CD14-positive monocyte (primary cell): ENCODE measurements at regions of chrX and their contacts with region 1.

Region 1: DNA sequence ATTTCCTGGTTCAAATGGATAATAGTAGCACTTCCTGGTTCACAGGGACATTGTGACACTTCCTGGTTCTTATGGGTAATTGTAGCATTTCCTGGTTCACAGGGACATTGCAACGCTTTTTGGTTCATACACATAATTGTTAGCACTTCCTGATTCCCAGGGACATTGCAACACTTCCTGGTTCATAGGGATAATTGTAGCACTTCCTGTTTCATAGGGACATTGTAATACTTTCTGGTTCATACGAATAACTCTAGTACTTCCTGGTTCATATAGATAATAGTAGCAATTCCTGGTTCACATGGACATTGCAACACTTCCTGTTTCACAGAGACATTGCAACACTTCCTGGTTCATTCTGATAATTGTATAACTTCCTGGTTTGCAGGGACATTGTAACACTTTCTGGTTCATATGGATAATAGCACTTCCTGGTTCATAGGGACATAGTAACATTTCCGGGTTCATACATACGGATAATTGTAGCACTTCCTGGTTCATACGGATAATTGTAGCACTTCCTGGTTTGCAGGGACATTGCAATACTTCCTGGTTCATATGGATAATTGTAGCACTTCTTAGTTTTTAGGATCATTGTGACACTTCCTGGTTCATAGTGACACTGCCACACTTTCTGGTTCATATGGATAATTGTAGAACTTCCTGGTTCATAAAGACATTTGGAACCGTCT is 61.6 kb upstream of the CD99 start:
- DNase-seq: peak; percentile 62 to 86 (median 76)
- H3K4me3 ChIP-seq: peak overlapping the region in 1 of 3 experiments; percentile 16
- H3K4me3 Mint-ChIP-seq: no peak overlapping the region
- H3K27ac ChIP-seq: peak overlapping the region in 1 of 2 donors; percentile 68
- H3K27ac Mint-ChIP-seq: peak overlapping the region; percentile 82 to 95 (median 90)
- H3K4me1 ChIP-seq: no peaks in the 10 kb centered on the region
- H3K4me1 Mint-ChIP-seq: peaks cover 6% of the 10 kb centered on the region
- H3K27me3 ChIP-seq: no peaks in the 10 kb centered on the region
- H3K27me3 Mint-ChIP-seq: peaks cover 0 to 28% (median 0%) of the 10 kb centered on the region in 3 donors
- CTCF ChIP-seq: no peak

Region 2: DNA sequence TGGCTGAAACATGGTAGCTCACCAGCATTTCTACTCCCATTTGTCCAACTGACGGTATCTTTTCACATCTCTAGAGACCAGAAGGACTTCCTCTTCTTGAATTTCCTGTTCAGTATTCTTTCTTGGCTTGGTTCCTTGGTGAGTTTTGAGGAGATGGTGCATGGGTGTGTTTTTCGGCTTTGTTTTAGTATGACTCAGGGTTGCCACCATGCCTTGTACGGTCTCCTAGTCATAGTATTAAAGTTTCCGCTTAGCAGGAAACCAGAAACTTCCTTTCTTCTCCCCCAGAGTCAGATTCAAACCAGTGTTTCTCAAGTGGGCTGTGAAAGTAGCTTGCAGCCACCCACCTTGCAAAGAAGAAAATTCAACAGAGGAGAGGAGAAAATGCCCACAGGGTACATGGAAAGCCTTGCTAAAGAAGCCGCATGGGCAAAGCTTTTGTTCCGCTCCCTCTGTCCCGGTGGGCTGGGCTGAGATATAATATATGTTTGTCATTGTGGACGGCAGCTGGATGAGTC is 67.3 kb after region 1 on chrX:
- intact Hi-C with region 1: loop called in 1 of 2 experiments (anchors 5 kb)
- DNase-seq: peak; percentile 87 to 95 (median 95)
- H3K4me3 ChIP-seq: peak overlapping the region; percentile 11 to 52 (median 19)
- H3K4me3 Mint-ChIP-seq: peak overlapping the region; percentile 58 to 73
- H3K27ac ChIP-seq: peak overlapping the region; percentile 81 to 83
- H3K27ac Mint-ChIP-seq: peak overlapping the region; percentile 89 to 97 (median 95)
- H3K4me1 ChIP-seq: peaks cover 63 to 74% of the 10 kb centered on the region in 2 donors
- H3K4me1 Mint-ChIP-seq: peaks cover 83% of the 10 kb centered on the region
- H3K27me3 ChIP-seq: no peaks in the 10 kb centered on the region
- H3K27me3 Mint-ChIP-seq: peaks cover 0 to 13% (median 1%) of the 10 kb centered on the region in 3 donors
- CTCF ChIP-seq: no peak